Activated CD4-positive, alpha-beta T cell treated with anti-CD3 and anti-CD28 coated beads, Interleukin-2, amount 10 ng/mL, durations not matched to agents 24 days and 14 days (primary cell): ENCODE measurements at regions of chr14 and their contacts with region 1.

Region 1: DNA sequence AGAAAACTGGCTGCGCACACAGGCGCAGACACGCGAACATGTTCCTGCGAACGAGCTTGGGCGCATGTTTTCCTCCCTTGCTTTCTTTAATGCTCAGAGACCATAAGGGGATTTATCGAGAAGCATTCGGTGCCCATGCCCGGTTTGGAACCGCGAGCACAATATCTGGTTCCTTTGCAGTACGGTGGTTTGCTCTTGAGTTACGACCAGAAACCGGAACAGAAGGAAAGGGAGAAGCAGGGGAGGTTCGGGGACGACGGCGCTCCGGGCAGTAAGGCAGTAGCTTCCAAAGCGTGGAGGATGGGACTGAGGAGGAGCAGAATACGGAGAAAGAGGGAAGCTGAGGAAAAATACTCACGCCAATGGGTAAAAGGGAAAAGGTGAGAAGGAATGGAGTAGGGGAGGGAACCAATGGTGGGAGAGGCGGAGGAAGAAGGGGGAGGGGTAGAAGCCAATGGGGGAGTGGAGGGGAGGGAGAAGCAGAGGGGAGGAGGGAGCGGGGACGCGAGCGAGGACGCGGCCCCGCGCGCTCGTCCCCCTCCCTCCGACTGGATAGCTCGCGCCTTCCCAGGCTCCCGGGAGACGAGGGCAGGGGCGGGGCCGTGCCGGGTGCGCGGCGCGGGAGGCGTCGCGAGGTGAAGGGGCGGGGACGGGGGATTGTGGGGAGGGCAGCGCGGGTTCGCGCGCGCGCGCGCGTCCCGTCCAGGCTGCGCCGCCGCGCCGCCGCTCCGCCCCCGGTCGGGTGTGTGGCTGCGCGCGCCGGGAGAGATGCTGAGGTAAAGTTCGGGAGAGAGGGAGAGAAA is 625 bp upstream of the ARHGAP5 start:
- DNase-seq: peak; percentile 93
- H3K4me3 Mint-ChIP-seq: peak overlapping the region; percentile 97
- H3K27ac Mint-ChIP-seq: peak overlapping the region; percentile 94
- H3K4me1 Mint-ChIP-seq: peaks cover 34% of the 10 kb centered on the region
- H3K27me3 Mint-ChIP-seq: peaks cover 17% of the 10 kb centered on the region

Region 2: DNA sequence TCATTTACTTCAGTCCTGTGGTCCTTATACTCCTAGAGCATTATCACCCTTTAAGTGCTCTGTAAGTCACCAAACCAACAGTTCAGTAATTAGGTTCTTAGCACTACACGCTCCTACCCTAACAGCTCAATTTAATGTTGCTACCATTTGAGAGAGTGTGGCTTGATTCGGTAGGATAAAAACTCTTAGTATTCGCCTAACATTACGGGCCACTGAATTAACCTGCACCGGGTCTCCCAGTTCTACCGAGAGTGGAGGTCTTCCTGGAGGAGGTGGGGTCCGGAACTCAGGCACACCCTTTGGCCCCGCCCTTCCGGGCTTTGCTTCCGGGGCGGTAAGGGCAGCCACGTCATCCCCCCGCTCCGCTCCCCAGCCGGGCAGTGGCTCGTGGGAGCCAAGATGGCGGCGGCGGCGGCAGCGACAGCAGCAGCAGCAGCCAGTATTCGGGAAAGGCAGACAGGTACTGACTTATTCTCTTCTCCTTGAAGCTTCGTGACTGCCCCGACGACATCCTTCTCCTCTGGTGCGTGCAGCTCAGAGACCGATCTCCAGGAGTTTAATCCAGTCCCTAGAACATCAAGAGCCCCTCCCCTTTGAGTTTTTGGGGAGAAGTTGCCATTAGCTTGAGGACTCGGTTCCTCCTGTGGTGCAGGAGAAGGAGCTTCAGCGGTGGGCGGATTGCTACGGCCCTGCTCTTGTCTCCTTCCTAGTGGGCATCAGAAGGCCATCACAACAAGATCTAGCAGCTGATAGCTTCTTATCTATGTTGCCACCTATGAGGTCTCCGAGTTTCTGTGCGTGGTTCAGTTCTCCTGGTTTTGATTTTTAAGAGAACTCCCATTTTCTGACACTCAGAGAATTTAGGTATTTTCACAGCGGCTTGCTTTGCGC is 1454.3 kb before region 1 on chr14 and contains the start of gene SCFD1:
- intact Hi-C with region 1: loop called (anchors 2 kb)
- DNase-seq: peak; percentile 99
- H3K4me3 Mint-ChIP-seq: peak within 1 kb of the TSS; percentile 87
- H3K27ac Mint-ChIP-seq: peak within 1 kb of the TSS; percentile 95
- H3K4me1 Mint-ChIP-seq: peaks cover 32% of the 10 kb centered on the region
- H3K27me3 Mint-ChIP-seq: no peaks in the 10 kb centered on the region
- total RNA-seq, gene SCFD1: 75.3 and 81.0 TPM in 2 replicates

Region 3: DNA sequence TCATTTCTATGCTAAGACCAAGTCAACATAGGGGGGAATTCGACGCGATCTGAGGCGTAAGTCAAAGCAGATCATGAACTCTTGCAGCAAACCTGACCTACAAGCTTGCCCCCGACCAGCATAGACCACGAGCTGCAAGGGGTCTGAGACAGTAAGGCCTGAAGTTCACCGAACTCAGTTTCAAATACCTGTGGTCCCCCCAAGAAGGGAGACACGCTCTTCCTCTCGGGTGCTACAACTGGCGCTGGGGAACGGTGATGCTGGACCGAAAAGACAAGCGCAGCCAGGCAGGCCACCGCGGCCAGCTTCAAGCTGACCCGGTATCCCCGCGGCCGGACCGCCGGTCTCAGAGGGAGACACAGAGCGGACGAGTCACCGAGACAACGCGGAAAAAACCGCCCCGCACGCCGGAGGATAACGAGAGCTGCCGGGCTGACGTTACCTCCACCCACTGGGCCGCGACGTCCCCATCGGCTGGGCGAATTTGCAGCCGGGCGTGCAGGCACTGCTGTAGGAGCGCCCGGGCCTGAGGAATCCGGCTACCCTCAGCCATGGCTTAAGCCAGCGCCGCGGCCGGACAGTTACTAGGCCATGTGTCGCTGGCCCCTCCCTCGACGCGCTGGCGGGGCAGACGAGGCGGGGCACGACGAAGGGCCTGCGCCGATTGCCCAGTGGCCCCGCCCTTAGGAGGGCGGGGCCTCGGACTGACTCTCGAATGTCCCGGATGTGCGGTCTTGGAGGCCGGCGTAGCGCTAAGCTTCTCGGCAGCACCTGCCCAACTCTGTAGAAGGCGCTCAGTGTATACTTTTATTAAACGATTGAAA is 619.4 kb before region 1 on chr14 and contains the start of gene DTD2:
- intact Hi-C with region 1: loop called (anchors 1 kb)
- DNase-seq: peak; percentile 97
- H3K4me3 Mint-ChIP-seq: peak within 1 kb of the TSS; percentile 95
- H3K27ac Mint-ChIP-seq: peak within 1 kb of the TSS; percentile 98
- H3K4me1 Mint-ChIP-seq: peaks cover 24% of the 10 kb centered on the region
- H3K27me3 Mint-ChIP-seq: peaks cover 4% of the 10 kb centered on the region
- total RNA-seq, gene DTD2: 30.8 and 32.2 TPM in 2 replicates

Region 4: DNA sequence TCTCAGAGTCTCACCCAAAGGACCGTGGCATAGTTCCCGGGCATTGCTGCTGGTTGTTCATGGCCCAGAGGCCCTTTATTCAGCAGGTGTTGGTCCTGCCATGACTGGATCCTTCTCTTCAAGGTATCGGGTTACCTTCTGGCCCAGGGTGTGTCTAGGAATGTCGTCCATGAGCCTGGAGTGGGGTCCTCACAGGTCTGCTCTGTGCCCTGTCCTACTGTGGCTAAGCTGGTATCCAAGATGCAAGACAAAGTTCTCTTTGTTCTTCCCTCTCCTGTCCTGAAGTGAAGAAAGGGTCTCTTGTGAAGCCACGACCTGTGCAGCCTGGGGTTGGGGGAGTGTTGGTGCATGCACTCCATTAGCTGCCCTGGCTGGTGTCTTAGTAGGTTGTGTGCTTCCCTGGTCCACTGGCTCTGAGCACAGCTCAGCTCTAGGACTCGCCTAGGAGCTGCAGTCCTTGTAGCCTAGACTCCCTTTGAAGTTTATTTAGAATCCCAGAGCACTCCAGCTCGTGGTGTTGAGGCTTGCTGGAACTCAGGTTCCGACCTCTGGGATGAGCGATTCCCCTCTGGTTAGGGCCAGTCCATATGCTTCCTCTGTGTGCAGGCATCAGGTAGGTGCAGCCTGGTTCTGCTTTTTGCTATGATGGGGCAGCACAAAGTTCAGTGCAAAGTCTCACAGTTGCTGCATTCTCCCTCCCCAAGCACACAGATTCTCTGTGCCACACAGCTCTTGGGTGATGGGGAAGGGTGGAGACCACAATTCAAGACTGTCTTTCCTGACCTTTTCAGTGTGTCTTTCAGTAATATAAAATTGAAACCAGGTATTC is 397.8 kb before region 1 on chr14:
- intact Hi-C with region 1: no loop called
- DNase-seq: no peak
- H3K4me3 Mint-ChIP-seq: no peak overlapping the region
- H3K27ac Mint-ChIP-seq: no peak overlapping the region
- H3K4me1 Mint-ChIP-seq: peaks cover 2% of the 10 kb centered on the region
- H3K27me3 Mint-ChIP-seq: no peaks in the 10 kb centered on the region

Region 5: DNA sequence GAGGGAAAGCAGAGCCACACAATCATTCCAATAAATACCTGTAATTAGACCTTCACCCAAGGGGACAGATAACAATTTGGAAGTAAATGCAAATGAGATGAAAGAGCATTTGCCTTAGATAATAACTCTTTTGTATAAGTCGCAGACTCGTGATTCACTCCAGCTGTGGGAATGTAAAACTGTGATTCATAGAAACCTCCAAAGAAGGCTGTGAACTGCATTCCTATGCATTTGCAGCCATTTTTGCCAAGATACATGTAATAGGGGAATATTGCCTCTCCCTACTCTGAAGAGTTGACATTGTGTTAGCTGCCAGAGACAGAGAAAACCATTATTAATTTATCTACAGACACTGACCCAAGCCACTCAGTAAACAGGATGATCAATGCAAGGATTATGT is 181.3 kb before region 1 on chr14:
- intact Hi-C with region 1: no loop called
- DNase-seq: no peak
- H3K4me3 Mint-ChIP-seq: no peak overlapping the region
- H3K27ac Mint-ChIP-seq: no peak overlapping the region
- H3K4me1 Mint-ChIP-seq: no peaks in the 10 kb centered on the region
- H3K27me3 Mint-ChIP-seq: peaks cover 2% of the 10 kb centered on the region

Region 6: DNA sequence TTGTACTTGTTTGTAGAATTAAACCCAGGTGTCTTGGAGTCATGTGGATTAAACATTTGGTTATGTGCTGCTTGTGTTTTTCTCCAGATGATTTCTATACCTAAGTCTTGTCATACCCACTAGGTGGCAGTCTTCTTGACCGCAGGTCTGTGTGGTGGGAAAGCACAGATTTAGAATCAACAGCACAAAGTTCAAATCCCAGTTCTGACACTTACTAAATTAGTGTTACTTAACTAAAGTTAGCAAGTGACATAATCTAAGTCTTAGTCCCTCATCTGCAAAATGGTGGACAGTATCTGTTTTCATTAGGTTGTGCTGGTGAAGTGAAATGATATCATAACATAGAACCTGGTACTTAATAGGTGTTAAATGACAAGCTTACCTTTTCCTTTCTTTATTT is 150.4 kb before region 1 on chr14:
- intact Hi-C with region 1: loop called (anchors 5 kb)
- DNase-seq: peak; percentile 76
- H3K4me3 Mint-ChIP-seq: no peak overlapping the region
- H3K27ac Mint-ChIP-seq: no peak overlapping the region
- H3K4me1 Mint-ChIP-seq: peaks cover 8% of the 10 kb centered on the region
- H3K27me3 Mint-ChIP-seq: no peaks in the 10 kb centered on the region

Region 7: GRCh38 chr14:32102152-32102787 is 25.8 kb after region 1 on chr14:
- intact Hi-C with region 1: loop called (anchors 1 kb)
- DNase-seq: peak; percentile 70
- H3K4me3 Mint-ChIP-seq: peak overlapping the region; percentile 42
- H3K27ac Mint-ChIP-seq: peak overlapping the region; percentile 73
- H3K4me1 Mint-ChIP-seq: peaks cover 20% of the 10 kb centered on the region
- H3K27me3 Mint-ChIP-seq: no peaks in the 10 kb centered on the region

Region 8: GRCh38 chr14:32252030-32252670 is 175.7 kb after region 1 on chr14:
- intact Hi-C with region 1: loop called (anchors 1 kb)
- DNase-seq: peak; percentile 87
- H3K4me3 Mint-ChIP-seq: no peak overlapping the region
- H3K27ac Mint-ChIP-seq: no peak overlapping the region
- H3K4me1 Mint-ChIP-seq: no peaks in the 10 kb centered on the region
- H3K27me3 Mint-ChIP-seq: no peaks in the 10 kb centered on the region

Region 9: DNA sequence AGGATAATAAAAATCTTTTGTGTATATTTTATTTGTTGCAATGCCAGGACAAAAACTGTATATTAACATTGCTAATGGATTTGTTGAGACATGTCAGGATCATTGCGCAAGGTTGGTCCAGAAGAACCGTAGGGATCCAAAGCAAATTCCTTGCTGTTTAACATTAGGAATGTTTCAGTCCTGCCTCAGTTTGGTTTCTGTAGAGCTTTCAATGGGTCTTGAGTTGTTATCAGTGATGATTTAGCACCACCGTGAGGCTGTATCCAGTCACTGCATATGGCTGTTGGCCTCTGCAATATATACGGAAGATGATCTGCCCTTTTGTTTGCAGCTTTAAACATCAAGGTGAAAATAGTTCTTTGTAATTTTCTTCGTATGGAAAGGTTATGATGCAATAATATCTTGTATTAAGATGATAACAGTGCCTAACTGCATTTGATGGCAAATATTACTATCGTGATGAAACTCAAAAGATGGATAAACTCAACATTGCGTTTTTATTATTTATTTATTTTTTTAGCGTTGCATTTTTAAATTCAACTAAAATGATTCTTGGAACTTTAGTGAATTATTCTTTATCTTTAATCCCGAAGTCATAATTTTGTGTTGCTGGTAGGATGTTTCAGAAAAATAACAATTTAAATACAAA is 483.9 kb after region 1 on chr14:
- intact Hi-C with region 1: loop called (anchors 2 kb)
- DNase-seq: peak; percentile 81
- H3K4me3 Mint-ChIP-seq: no peak overlapping the region
- H3K27ac Mint-ChIP-seq: no peak overlapping the region
- H3K4me1 Mint-ChIP-seq: peaks cover 13% of the 10 kb centered on the region
- H3K27me3 Mint-ChIP-seq: no peaks in the 10 kb centered on the region